ENCODE measurements at regions of chr2 and their contacts with region 1.

Region 1: GRCh38 chr2:225002039-225002655 is 40.1 kb downstream of the DOCK10 start:
- DNase-seq: peak; percentile 42
- H3K4me3 Mint-ChIP-seq: no peak overlapping the region
- H3K27ac Mint-ChIP-seq: peak overlapping the region; percentile 80
- H3K4me1 Mint-ChIP-seq: peaks cover 87% of the 10 kb centered on the region
- H3K27me3 Mint-ChIP-seq: no peaks in the 10 kb centered on the region

Region 2: DNA sequence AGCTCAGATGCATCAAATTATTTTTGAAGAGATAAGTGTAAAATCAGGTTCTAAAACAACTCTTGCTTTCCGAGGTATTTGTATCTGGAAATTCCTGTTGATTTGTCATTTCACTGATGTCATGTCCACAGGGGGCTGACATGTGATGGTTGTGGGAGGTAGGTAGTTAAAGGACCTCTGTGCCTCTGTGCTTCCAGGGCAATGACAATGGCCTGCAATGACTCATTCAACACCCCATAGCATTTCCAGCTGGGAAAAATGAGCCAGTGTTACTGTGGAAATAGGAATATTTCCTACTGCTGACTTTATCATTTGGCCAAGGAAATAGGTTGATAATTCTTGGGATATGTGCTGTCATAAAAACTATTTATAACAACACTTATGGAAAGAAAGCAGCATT is 199.7 kb before region 1 on chr2:
- intact Hi-C with region 1: loop called (anchors 5 kb)
- DNase-seq: no peak
- H3K4me3 Mint-ChIP-seq: no peak overlapping the region
- H3K27ac Mint-ChIP-seq: no peak overlapping the region
- H3K4me1 Mint-ChIP-seq: no peaks in the 10 kb centered on the region
- H3K27me3 Mint-ChIP-seq: no peaks in the 10 kb centered on the region

Region 3: DNA sequence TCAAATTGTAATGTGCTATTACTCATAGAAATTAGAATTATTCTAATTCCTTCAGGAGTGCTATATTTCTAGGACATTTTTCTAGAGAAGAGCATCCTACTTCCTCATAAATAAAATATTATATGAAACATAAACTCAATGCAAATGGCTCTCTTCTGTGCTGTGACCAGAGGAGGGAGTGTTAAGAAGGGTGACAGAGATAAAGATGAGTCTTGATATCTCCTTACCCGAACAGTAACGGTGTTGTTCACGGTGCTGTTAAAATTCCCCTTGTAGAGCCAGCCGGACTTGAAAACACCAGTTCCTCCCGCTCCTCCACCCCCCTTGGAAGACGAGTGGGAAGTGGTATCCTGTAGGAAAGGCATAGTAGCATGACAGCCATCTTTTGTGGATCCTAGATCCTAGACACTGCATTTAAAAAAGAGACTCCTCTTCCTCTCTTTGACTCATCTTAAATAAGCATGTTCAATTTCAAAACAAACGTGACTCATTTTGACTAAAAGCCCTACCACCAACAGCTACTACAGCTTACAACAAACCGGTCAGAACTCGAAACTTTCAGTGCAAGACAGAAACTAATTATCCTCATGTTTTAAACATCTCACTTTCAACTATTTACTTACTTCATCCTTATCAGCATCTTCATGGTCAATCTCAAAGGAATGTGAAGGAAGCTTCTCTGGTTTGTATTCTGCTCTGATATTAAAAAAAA is 116.2 kb before region 1 on chr2:
- intact Hi-C with region 1: loop called (anchors 1 kb)
- DNase-seq: no peak
- H3K4me3 Mint-ChIP-seq: no peak overlapping the region
- H3K27ac Mint-ChIP-seq: peak overlapping the region; percentile 67
- H3K4me1 Mint-ChIP-seq: peaks cover 77% of the 10 kb centered on the region
- H3K27me3 Mint-ChIP-seq: no peaks in the 10 kb centered on the region

Region 4: DNA sequence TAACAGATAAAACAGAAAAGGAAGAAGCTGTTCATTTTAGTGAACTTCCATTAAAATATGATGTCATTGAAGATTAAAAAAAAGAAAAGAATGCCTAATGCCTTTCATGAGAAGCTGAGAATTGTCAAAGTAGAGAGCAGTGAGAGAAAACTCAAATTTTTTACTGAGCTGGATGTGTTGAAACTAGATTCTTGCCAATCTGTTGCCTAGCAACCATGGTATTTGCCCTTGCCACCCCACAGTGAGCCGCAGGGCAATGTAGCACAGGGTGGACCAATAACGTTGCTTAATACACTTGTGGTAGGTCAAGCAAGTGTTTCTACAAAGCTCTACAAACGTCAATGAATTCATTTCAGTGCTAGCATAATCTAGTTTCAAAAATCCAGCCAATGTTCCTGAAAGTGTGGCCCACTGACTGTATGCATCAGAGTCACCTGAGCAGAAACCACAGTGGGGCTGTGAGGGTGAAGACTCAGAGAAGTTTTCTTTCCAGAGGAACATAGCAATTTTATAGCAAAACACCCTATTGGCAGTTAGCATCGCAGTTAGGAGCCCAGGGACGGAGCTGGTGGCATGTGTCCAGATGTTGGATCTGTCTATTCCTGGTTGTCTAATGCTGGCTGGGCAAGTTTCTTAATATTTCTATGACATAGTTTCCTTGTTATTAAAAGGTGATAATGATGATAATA is 92.1 kb before region 1 on chr2:
- intact Hi-C with region 1: no loop called
- DNase-seq: no peak
- H3K4me3 Mint-ChIP-seq: no peak overlapping the region
- H3K27ac Mint-ChIP-seq: peak overlapping the region; percentile 60
- H3K4me1 Mint-ChIP-seq: peaks cover 54% of the 10 kb centered on the region
- H3K27me3 Mint-ChIP-seq: no peaks in the 10 kb centered on the region

Region 5: DNA sequence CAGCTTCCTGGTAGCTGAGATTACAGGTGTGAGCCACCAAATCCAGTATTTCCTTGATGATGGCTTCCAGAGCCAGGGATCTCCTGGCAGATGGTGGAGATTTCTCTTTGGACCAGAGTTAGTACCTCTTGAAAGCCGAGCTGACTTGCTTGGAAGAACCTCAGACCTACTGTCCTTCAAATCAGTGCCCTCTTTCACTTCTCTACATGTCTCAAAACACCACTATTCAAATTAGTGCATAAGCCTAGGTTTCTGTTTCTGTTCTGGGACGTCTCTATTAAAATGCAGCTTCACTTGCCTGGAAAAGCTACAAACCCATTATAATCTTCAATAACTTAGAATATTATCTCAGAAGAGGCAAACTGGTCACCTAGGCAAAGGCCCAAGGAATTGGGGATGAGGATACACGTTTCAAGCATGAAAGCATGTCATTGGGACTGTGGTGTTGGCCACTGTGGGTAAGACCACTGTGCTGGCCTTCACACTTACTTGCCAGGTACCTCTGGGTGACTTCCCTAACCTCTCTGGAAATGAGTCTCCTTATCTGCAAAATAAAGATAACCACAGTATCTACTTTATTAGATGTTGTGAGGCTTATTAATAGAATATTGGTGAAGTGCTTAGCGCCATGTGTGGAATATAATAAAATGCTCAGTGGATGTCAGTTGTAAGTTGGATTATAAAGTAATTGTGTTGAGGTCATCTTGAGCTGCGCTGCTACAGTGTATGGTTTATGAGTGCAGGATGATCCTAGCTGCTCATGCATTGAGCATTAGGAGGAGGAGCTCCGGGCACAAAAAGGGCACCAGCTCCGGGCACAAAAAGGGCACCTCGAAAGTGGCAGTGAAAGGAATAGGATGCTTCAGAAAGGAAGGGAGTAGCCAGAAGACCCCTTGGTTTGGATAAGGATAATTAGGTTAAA is 44.3 kb before region 1 on chr2:
- intact Hi-C with region 1: no loop called
- DNase-seq: no peak
- H3K4me3 Mint-ChIP-seq: peak overlapping the region; percentile 16
- H3K27ac Mint-ChIP-seq: peak overlapping the region; percentile 26
- H3K4me1 Mint-ChIP-seq: peaks cover 86% of the 10 kb centered on the region
- H3K27me3 Mint-ChIP-seq: no peaks in the 10 kb centered on the region

Region 6: DNA sequence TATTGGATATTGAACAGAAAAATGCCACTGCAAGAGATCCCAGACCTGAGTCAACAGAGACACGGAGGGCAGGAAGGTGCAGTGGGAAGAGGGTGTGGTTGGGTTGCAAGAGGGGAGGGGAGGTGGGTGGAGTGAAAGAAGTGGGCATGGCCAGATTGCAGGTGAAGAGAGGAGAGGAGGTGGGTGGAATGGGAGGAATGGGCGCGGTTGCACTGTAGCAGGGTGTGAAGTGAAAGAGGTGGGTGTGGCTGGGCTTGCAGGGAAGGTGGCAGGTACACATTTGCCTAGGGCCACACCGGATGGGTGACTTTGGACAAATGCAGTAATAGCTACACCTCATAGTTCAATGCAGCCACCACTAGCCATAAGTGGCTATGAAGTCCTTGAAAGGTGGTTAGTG is 30.9 kb before region 1 on chr2:
- intact Hi-C with region 1: loop called (anchors 2 kb)
- DNase-seq: no peak
- H3K4me3 Mint-ChIP-seq: no peak overlapping the region
- H3K27ac Mint-ChIP-seq: peak overlapping the region; percentile 29
- H3K4me1 Mint-ChIP-seq: peaks cover 72% of the 10 kb centered on the region
- H3K27me3 Mint-ChIP-seq: no peaks in the 10 kb centered on the region

Region 7: DNA sequence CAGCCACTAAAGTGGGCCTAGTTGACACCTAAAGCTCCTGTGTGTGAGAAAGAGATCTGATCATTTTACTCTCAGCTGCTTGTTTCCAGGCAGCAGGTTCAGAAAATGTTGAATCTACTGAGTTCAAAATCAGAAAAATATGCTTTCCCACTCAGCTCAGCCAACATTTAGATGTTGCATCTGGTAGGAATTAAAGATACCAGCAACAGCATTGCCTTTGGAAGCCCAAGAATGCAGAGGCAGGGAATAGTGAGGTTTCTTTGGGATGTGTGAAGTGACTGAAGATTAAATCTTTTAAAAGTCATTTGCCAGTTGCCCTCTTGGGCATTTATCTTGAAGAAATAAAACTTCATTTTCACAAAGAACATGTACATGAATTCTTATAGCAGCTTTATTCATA is 74.0 kb after region 1 on chr2:
- intact Hi-C with region 1: no loop called
- DNase-seq: no peak
- H3K4me3 Mint-ChIP-seq: no peak overlapping the region
- H3K27ac Mint-ChIP-seq: no peak overlapping the region
- H3K4me1 Mint-ChIP-seq: no peaks in the 10 kb centered on the region
- H3K27me3 Mint-ChIP-seq: peaks cover 11% of the 10 kb centered on the region

Region 8: DNA sequence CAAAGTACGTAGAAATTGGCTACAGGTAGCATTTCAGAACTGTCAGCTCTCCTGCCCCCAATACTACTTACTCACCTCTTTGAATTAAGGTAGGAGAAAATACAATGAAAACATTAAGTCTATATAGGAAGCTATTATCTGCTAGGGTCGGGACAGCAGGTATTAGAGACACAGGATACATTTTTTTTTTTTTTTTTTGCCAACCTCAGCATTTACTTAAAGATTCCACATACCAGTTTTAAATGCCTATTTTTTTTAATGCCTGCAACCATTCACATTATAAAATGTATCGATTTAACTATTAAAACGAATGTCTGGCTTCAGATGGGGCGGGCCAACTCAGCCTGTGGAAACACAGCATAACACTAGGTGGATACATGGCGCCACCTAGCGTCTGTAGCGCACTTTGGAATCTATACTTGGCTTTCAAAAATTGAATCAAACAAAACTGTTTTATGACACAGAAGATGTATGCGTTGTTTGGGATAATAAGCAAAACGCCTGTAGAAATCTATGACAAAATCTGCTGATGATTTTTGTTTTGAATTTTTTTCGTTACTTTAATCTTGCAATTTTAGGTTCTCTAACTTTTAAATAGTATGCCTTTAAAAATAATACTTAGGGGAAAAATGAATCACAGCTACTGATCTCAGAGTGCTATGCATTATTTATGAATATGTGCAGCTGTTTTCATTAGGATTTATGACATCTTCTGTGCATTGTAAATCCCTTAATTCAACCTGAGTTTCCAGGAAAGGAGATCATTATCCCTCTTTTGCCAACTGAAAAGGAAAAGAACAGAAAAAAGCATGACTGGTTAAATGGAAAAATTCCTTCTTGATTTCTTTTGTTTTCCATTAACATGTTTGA is 658.4 kb after region 1 on chr2:
- intact Hi-C with region 1: loop called (anchors 1 kb)
- DNase-seq: peak; percentile 43
- H3K4me3 Mint-ChIP-seq: no peak overlapping the region
- H3K27ac Mint-ChIP-seq: no peak overlapping the region
- H3K4me1 Mint-ChIP-seq: no peaks in the 10 kb centered on the region
- H3K27me3 Mint-ChIP-seq: peaks cover 18% of the 10 kb centered on the region